Left cardiac atrium (tissue), 4 donors: ENCODE measurements at regions of chr21 and their contacts with region 1.

Region 1: GRCh38 chr21:37711836-37712568 is 204.3 kb downstream of the KCNJ6 start:
- DNase-seq: peak; percentile 77
- ATAC-seq: peak; percentile 88 to 90

Region 2: DNA sequence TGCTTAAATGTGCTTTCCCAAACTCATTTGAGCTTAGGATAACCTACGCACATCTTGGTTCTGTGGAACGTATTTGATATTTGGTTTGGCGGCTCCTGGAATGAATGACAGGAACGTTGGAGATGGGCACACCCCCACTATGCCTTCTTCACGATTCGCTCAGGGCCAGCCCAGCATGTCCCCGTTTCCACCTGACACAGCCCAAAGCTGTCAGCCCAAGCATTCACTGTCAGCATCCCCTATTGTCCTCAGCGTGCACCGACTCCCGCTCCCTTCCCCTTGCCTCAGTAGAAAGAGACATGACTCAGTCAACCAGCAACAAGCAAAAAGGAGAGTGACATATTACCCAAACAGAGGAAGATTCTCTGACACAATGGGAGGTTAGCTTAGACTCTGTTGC is 22.8 kb after region 1 on chr21:
- intact Hi-C with region 1: no loop called
- DNase-seq: no peak
- ATAC-seq: no peak

Region 3: DNA sequence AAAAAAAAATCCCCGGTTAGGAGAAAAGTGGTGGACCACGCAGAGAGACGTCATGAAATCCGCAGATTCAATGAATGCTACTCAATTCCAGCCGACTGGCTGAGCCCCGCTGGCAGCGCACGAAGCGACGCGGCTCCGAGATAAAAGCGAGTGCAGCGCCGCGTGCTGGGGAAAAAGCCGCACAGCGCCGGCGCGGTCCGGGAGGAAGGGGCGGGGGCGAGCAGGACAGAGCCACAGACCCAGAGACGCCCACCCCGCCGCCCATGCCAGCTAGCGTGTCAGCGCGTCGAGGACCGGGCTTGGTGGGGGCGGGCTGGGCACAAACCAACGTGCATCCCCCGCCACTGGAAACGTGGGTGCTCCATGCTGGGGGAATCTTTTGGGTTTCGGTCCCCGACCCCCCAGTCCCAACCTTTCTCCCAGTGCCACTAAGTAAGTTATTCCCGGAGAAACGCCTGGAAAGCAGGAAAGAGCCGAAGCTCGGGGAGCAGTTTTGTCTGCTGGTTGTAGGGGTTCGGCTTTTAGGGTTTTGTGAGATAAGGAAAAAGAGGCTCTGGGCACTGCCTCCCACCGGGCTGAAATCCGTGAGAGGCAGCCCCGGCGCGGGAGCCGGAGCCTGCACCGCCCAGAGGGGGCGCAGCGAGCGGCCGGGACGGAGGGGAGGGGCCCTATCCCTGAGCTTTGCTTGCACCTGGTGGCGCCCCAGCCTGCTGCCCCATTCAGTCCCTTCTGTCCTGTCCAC is 204.5 kb after region 1 on chr21 and contains the start of gene KCNJ6:
- intact Hi-C with region 1: loop called (anchors 5 to 10 kb)
- DNase-seq: peak; percentile 38
- ATAC-seq: peak; percentile 53 to 81
- total RNA-seq, gene KCNJ6: not detected

Region 4: DNA sequence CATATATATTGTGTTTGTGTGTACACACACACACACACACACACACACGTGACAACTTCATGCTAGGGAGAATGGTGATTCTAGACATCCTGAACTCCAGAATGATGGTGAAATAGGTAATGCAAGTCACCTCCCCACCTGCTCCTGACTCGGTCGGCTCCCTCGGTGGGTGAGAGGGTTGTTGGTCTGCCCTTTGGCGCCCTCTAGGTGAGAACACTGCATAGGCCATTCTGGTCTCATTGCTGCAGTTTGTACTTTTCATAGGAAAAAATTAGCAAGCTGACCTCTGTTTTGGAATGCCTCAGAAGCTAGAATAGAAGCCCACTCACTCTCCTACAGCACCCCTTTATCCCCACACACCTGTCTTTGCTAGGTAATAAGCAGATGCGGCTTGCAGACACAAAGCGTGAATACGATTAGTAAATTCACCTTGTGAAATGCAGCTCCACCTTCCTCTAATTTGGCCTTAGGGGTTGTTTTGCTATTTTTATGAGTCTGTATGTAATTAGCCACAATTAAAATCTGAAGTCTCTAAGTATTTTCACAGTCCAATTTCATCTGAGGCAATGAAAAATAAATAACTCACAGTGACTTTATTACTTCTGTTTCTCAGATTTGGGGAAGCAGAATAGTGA is 414.8 kb after region 1 on chr21:
- intact Hi-C with region 1: loop called (anchors 2 to 10 kb)
- DNase-seq: peak; percentile 48
- ATAC-seq: peak; percentile 74 to 77